GM13976 (cell line): ENCODE measurements at regions of chr3 and their contacts with region 1.

Region 1: GRCh38 chr3:132641837-132642538 is 17.6 kb downstream of the ACAD11 start:
- DNase-seq: peak; percentile 63
- CTCF ChIP-seq: peak; percentile 17

Region 2: DNA sequence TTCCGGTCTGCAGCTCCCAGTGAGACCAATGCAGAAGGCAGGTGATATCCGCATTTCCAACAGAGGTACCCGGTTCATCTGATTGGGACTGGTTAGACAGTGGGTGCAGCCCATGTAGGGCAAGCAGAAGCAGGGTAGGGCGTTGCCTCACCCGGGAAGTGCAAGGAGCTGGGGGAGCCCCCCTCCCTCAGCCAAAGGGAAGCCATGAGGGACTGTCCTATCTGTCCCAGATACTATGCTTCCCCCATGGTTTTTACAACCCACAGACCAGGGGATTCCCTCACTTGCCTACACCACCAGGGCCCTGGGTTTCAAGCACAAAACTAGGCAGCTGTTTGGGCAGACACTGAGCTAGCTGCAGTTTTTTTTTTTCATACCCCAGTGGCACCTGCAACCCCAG is 679.0 kb before region 1 on chr3:
- in situ Hi-C with region 1: no loop called
- DNase-seq: no peak
- CTCF ChIP-seq: no peak

Region 3: DNA sequence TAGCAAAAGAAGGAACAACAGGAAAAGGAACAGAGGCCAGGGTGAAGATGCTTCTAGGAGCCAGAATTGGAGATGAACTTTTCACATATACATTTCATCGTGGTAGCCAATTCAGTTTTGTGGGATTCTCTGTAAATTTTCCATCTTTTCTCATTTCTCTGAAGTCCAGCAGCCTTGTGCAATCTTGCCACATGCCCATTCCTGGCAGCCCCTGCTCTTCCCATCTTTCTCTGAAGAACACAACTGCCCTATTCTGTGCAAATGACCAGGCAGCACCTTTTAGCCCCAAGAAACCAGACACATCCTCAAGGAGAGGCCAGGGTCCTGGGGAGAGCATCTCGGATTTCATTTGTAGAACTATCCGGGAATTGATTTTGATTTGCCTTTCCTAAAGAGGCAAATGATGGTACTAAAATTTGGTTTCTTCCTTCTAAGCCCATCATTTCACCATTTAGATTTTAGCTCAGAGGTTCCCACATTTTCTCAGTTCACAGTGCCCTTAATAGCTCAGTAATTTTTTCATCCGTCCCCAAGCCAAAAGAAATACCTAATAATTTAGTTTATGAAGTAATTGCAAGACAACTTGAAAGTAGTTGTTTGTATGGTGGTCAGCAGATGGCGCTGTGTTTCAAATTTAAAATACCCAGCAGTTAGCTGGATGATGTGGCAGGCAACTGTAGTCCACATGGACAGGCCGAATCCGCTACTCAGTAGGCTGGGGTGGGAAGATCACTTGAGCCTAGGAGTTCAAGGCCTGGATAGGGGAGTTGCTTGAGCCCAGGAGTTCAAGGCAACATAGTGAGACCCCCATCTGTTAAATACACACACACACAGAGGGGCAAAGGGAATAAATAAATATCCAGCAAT is 106.2 kb before region 1 on chr3:
- in situ Hi-C with region 1: loop called (anchors 25 kb)
- DNase-seq: peak; percentile 44
- CTCF ChIP-seq: peak; percentile 47

Region 4: DNA sequence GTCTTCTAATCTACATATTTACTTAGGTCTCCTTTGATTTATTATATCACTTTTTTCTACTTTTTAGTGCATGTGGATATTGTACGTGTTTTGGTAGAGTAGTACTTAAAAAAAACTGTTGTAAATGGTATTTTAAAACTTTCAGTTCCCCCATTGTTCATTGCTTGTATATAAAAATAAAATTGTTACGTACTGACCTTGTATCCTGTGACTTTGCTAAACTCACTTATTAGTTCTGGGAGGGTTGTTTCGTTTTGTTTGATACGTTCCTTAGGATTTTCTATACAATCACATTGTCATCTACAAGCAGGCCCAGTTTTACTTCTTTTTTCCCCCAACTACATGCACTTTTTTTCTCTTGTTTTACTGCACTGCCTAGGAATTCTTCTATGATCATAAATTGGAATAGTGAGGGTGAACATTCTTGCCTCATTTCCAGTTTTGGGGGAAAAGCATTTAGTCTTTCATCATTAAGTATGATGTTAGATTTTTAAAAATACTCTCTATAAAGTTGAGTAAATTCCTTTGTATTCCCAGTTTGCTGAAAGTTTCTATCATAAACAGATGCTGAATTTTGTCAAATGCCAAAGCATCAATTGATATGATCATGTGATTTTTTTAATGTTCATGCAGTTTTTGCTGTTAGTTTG is 78.4 kb before region 1 on chr3:
- in situ Hi-C with region 1: no loop called
- DNase-seq: no peak
- CTCF ChIP-seq: no peak

Region 5: GRCh38 chr3:133578548-133579191 is 936.7 kb after region 1 on chr3:
- in situ Hi-C with region 1: no loop called
- DNase-seq: no peak
- CTCF ChIP-seq: peak; percentile 17